GM12878 (cell line): ENCODE measurements at regions of chr22 and their contacts with region 1.

Region 1: DNA sequence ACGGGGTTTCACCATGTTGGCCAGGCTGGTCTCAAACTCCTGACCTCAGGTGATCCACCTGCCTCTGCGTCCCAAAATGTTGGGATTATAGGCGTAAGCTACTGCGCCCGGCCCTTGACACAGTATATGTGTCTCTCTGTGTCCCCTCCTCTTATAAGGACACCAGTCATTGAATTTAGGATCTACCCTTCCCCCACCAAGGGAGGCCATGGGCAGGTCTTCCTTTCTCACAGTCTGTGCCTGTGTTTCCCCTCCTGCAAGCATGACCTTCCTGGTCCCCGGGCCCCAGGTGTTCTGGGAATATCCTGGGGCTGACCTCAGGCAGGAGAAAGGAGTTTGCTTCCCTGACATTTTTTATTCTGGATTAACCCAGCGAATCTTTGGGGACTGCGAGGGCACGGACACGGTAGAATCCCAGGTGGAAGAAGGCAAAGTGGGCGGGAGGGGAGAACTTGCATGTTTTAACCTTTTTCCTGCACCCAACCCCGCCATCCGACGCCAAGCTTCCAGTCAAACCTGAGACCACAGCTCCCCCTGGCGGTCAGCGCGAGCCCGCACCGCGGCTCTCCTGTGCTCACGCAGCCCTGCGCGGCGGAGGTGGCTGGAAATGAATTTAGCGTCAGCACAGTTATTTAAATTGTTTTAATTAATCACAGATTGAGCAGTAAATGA is 42.1 kb upstream of the ISX start:
- DNase-seq: no peak
- ATAC-seq: peak; percentile 98
- H3K4me3 ChIP-seq: no peak overlapping the region
- H3K27ac ChIP-seq: no peak overlapping the region
- H3K4me1 ChIP-seq: no peaks in the 10 kb centered on the region
- H3K27me3 ChIP-seq: no peaks in the 10 kb centered on the region
- CTCF ChIP-seq: peak; percentile 88 to 94 (median 92)
- EP300 ChIP-seq: no peak
- POLR2A ChIP-seq: no peak
- RAD21 ChIP-seq: peak; percentile 90

Region 2: DNA sequence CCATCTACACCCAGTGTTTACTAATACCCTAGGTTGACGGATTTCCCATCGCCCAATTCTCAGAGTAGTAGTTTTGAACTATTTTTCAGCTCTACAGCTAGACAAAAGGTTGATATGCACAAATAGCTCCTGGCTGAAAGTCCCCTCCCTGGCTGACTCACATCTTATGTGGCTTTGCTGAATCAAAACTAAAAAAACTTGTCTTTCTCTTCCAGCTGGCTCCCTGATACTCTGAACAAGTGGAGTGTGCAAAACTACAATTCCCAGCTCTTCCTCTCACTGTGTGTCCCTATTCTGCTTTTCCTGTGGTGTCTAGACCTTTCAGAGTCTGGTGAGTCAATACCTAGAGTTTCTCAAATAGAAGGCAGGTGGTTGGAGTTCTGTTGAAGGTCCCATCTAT is 1090.8 kb before region 1 on chr22:
- CTCF ChIA-PET with region 1: no interaction called
- POLR2A ChIA-PET with region 1: no interaction called
- RAD21 ChIA-PET with region 1: no interaction called
- SMC1A ChIA-PET with region 1: no interaction called
- in situ Hi-C with region 1: loop called (anchors 10 kb)
- intact Hi-C with region 1: no loop called
- DNase-seq: no peak
- ATAC-seq: no peak
- H3K4me3 ChIP-seq: no peak overlapping the region
- H3K27ac ChIP-seq: no peak overlapping the region
- H3K4me1 ChIP-seq: no peaks in the 10 kb centered on the region
- H3K27me3 ChIP-seq: no peaks in the 10 kb centered on the region
- CTCF ChIP-seq: no peak
- EP300 ChIP-seq: no peak
- POLR2A ChIP-seq: no peak
- RAD21 ChIP-seq: no peak

Region 3: GRCh38 chr22:34414484-34415440 is 609.1 kb before region 1 on chr22:
- CTCF ChIA-PET with region 1: interaction called, 7 read pairs
- POLR2A ChIA-PET with region 1: no interaction called
- RAD21 ChIA-PET with region 1: interaction called, 7 read pairs
- SMC1A ChIA-PET with region 1: interaction called, 4 read pairs
- in situ Hi-C with region 1: loop called (anchors 5 kb)
- intact Hi-C with region 1: loop called (anchors 1 kb)
- DNase-seq: peak; percentile 39
- ATAC-seq: peak; percentile 75
- H3K4me3 ChIP-seq: no peak overlapping the region
- H3K27ac ChIP-seq: no peak overlapping the region
- H3K4me1 ChIP-seq: no peaks in the 10 kb centered on the region
- H3K27me3 ChIP-seq: no peaks in the 10 kb centered on the region
- CTCF ChIP-seq: peak; percentile 80 to 91 (median 83); a peak in 4 of 6 replicates
- EP300 ChIP-seq: no peak
- POLR2A ChIP-seq: no peak
- RAD21 ChIP-seq: peak; percentile 95

Region 4: DNA sequence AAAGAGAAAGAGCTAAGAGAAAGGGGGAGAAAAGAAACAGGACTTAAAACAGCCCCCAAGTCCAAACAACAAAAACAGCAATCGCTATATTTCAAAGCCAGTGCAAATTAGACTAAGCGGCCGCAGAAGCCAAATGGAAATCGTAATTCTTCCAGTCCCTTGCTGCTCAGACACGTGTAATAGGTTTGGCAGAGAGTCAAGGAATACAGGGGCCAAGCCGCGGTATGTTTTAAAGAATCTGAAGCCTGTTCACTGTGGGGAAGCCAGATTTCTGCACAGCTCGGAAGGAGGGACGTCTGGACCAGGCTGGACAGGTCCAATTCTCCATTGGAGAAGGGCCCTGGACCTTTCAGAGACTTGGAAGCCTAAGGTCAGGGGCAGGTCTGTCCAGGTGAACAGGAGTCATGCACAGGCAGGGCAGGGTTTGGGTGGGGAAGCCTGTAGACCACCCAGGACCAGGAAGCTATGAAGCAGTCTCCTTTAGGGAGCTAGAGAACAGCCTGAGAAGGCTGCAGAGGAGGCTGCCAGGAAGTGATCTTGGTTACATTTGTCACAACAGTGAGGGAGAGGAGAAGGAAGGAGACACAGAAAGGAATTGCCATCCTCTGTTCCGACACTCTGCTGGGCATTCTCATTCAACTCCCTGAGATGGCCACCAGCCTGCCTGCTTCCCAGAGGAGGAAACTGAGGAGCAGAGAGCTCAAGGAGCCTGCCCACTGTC is 223.4 kb before region 1 on chr22:
- CTCF ChIA-PET with region 1: interaction called, 6 read pairs
- POLR2A ChIA-PET with region 1: no interaction called
- RAD21 ChIA-PET with region 1: no interaction called
- SMC1A ChIA-PET with region 1: no interaction called
- in situ Hi-C with region 1: no loop called
- intact Hi-C with region 1: loop called (anchors 5 kb)
- DNase-seq: no peak
- ATAC-seq: no peak
- H3K4me3 ChIP-seq: no peak overlapping the region
- H3K27ac ChIP-seq: no peak overlapping the region
- H3K4me1 ChIP-seq: no peaks in the 10 kb centered on the region
- H3K27me3 ChIP-seq: peaks cover 0 to 2% of the 10 kb centered on the region in 2 experiments; a peak in 1 of 4 replicates
- CTCF ChIP-seq: no peak
- EP300 ChIP-seq: no peak
- POLR2A ChIP-seq: no peak
- RAD21 ChIP-seq: no peak

Region 5: DNA sequence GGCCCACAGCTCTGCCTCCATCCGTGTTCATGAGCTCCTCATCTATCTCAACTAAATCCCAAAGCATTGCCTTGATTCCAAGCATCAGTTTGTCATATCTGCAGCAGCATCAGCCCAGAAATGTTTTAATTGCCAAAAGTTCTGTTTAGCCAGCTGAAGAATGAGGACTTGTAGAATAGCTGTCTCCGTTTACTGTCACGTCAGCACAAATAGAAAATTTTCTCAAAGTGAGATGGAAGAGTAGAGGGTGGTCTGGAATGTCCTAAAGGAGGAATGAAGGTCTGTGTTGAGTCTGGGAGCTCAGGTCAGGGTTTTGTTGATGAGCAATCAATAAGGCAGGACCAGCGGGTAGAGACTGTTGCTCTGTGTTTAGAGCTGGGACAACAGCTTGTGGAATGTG is 92.8 kb before region 1 on chr22:
- CTCF ChIA-PET with region 1: no interaction called
- POLR2A ChIA-PET with region 1: no interaction called
- RAD21 ChIA-PET with region 1: no interaction called
- SMC1A ChIA-PET with region 1: no interaction called
- in situ Hi-C with region 1: no loop called
- intact Hi-C with region 1: no loop called
- DNase-seq: no peak
- ATAC-seq: no peak
- H3K4me3 ChIP-seq: no peak overlapping the region
- H3K27ac ChIP-seq: no peak overlapping the region
- H3K4me1 ChIP-seq: no peaks in the 10 kb centered on the region
- H3K27me3 ChIP-seq: no peaks in the 10 kb centered on the region
- CTCF ChIP-seq: no peak
- EP300 ChIP-seq: no peak
- POLR2A ChIP-seq: no peak
- RAD21 ChIP-seq: no peak

Region 6: DNA sequence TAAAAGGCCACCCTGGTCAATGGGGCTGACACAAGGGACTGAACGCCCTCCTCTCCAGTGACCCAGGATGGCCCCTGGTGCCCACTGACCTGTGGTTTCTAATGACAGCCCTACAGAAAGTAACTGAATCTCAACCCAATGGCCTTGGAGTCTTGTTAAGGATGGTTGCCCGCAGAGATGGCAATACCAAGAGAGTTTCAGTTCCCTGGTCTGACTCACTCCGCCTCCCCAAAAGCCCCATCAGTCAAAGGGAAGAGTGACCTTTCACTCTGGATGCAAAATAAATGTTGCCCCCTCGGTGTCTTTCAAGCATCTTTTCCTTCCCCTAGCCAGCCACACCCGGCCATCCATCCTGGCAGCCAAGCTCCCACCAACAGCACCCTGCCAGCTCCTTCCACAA is 15.6 kb before region 1 on chr22:
- CTCF ChIA-PET with region 1: interaction called, 10 read pairs
- POLR2A ChIA-PET with region 1: no interaction called
- RAD21 ChIA-PET with region 1: no interaction called
- SMC1A ChIA-PET with region 1: interaction called, 10 read pairs
- in situ Hi-C with region 1: no loop called
- intact Hi-C with region 1: no loop called
- DNase-seq: peak; percentile 41
- ATAC-seq: peak; percentile 90
- H3K4me3 ChIP-seq: no peak overlapping the region
- H3K27ac ChIP-seq: no peak overlapping the region
- H3K4me1 ChIP-seq: peaks cover 9% of the 10 kb centered on the region
- H3K27me3 ChIP-seq: no peaks in the 10 kb centered on the region
- CTCF ChIP-seq: no peak
- EP300 ChIP-seq: no peak
- POLR2A ChIP-seq: no peak
- RAD21 ChIP-seq: no peak

Region 7: DNA sequence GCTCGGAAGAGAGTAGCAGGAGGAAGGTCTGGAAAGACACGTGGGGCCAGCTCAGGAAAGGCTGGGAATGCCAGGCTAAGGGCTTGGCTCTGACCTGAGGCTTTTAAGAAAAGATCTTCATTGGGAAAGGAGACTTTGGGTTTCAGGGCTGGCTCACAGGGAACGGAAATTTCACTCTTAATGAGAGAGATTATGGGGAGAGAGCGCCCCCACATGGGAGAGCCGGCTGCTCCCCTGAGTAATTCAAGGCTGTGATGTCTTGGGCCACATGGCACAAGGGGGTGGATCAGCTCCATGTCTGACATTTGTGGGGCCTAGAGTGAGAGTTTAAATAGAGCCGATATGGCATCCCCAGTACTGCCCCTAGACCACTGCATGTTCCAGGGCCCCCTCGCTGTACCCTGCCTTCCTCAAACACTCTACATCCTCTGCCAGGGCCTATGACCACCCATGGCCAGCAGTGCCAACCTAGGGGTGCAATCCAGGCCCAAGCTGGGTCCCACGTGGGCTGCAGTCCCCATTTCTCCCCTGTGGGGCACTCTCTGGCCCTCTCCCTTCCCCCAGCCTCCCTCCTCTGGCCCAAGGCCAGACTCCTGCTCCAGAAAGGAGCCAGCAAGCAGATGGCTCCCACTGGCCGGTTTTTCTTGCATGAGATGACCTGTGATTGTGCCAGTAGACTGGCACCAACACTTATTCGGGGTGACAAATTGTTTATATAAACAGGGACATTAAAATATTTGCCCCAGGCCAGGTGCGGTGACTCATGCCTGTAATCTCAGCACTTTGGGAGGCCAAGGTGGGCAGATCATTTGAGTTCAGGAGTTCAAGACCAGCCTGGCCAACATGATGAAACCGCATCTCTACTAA is 117.3 kb after region 1 on chr22:
- CTCF ChIA-PET with region 1: interaction called, 7 read pairs
- POLR2A ChIA-PET with region 1: no interaction called
- RAD21 ChIA-PET with region 1: no interaction called
- SMC1A ChIA-PET with region 1: no interaction called
- in situ Hi-C with region 1: no loop called
- intact Hi-C with region 1: loop called (anchors 2 kb)
- DNase-seq: no peak
- ATAC-seq: peak; percentile 89
- H3K4me3 ChIP-seq: no peak overlapping the region
- H3K27ac ChIP-seq: peak overlapping the region; percentile 46
- H3K4me1 ChIP-seq: peaks cover 17% of the 10 kb centered on the region
- H3K27me3 ChIP-seq: no peaks in the 10 kb centered on the region
- CTCF ChIP-seq: peak; percentile 61 to 75 (median 68)
- EP300 ChIP-seq: no peak
- POLR2A ChIP-seq: no peak
- RAD21 ChIP-seq: peak; percentile 86